Activated CD4-positive, alpha-beta T cell treated with anti-CD3 and anti-CD28 coated beads for 36 hours (primary cell): ENCODE measurements at regions of chr14 and their contacts with region 1.

Region 1: GRCh38 chr14:61870163-61870562 is 107.9 kb downstream of the SNAPC1 start:
- DNase-seq: no peak
- ATAC-seq: no peak
- H3K4me3 Mint-ChIP-seq: no peak overlapping the region
- H3K27ac Mint-ChIP-seq: no peak overlapping the region
- H3K4me1 Mint-ChIP-seq: peaks cover 3% of the 10 kb centered on the region
- H3K27me3 Mint-ChIP-seq: peaks cover 26% of the 10 kb centered on the region

Region 2: DNA sequence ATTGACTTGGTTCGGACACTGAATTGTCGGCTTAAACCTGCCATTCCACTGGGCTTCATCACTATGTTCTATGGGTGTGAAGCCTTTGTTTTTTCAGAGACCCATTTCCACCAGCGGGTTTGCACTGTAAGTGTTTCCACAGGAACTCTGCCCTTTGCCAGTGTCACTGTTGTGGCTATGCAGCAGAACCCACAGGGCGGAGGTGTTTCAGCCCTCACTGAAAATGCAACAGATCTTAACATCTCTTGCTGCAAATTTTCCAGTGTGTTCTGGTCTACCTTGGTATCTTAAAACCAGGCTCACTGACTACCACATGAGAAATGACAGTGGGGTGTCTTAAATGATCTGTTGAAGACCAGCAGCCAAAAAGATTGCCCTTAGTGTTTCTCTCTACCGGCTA is 527.7 kb before region 1 on chr14:
- CTCF ChIA-PET with region 1: no interaction called
- POLR2A ChIA-PET with region 1: no interaction called
- intact Hi-C with region 1: no loop called
- DNase-seq: peak; percentile 91
- ATAC-seq: peak; percentile 60
- H3K4me3 Mint-ChIP-seq: peak overlapping the region; percentile 86
- H3K27ac Mint-ChIP-seq: peak overlapping the region; percentile 99
- H3K4me1 Mint-ChIP-seq: peaks cover 94% of the 10 kb centered on the region
- H3K27me3 Mint-ChIP-seq: no peaks in the 10 kb centered on the region

Region 3: GRCh38 chr14:61884711-61885110 is 14.5 kb after region 1 on chr14:
- CTCF ChIA-PET with region 1: interaction called, 4 read pairs
- POLR2A ChIA-PET with region 1: no interaction called
- intact Hi-C with region 1: loop called in 1 of 2 experiments (anchors 1 kb)
- DNase-seq: no peak
- ATAC-seq: no peak
- H3K4me3 Mint-ChIP-seq: no peak overlapping the region
- H3K27ac Mint-ChIP-seq: no peak overlapping the region
- H3K4me1 Mint-ChIP-seq: peaks cover 4% of the 10 kb centered on the region
- H3K27me3 Mint-ChIP-seq: peaks cover 22% of the 10 kb centered on the region

Region 4: DNA sequence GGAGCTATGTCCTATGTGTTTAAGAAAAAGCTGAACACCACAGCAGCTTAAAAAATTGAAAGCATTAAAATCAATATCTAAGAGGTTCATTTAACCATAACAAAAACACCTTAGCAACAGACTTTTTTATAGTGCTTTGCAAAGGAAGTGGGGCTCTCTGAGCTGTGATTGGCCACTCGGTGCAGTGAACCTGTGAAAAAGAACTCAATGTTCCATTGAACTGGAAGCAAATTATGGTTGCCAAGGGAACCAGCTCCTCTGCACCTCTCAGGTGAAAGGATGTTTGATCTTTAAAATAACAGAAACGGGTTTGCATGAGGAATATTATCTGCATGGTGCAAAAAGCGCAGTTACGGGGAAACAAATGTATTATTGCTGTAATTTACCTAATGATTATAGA is 41.4 kb after region 1 on chr14:
- CTCF ChIA-PET with region 1: no interaction called
- POLR2A ChIA-PET with region 1: no interaction called
- intact Hi-C with region 1: no loop called
- DNase-seq: no peak
- ATAC-seq: no peak
- H3K4me3 Mint-ChIP-seq: no peak overlapping the region
- H3K27ac Mint-ChIP-seq: no peak overlapping the region
- H3K4me1 Mint-ChIP-seq: peaks cover 11% of the 10 kb centered on the region
- H3K27me3 Mint-ChIP-seq: peaks cover 7% of the 10 kb centered on the region